Mammary epithelial cell (primary cell): ENCODE measurements at regions of chr3 and their contacts with region 1.

Region 1: GRCh38 chr3:112086076-112086854 is at the start of gene C3orf52:
- DNase-seq: peak; percentile 91
- H3K4me3 ChIP-seq: peak within 1 kb of the TSS; percentile 72 to 89 (median 84)
- H3K27ac ChIP-seq: peak within 1 kb of the TSS; percentile 96
- H3K4me1 ChIP-seq: peaks cover 19% of the 10 kb centered on the region
- H3K27me3 ChIP-seq: no peaks in the 10 kb centered on the region
- CTCF ChIP-seq: peak in 1 of 2 donors; percentile 18
- total RNA-seq, gene C3orf52: 15.4 to 16.8 TPM

Region 2: GRCh38 chr3:111676211-111677006 is 409.9 kb before region 1 on chr3:
- CTCF ChIA-PET with region 1: no interaction called
- dilution Hi-C with region 1: no loop called
- in situ Hi-C with region 1: no loop called
- intact Hi-C with region 1: no loop called
- DNase-seq: peak; percentile 88
- H3K4me3 ChIP-seq: peak overlapping the region; percentile 6 to 70 (median 57)
- H3K27ac ChIP-seq: peak overlapping the region; percentile 57
- H3K4me1 ChIP-seq: peaks cover 36% of the 10 kb centered on the region
- H3K27me3 ChIP-seq: no peaks in the 10 kb centered on the region
- CTCF ChIP-seq: no peak

Region 3: GRCh38 chr3:111904376-111905241 is 181.7 kb before region 1 on chr3:
- CTCF ChIA-PET with region 1: no interaction called
- dilution Hi-C with region 1: no loop called
- in situ Hi-C with region 1: no loop called
- intact Hi-C with region 1: loop called (anchors 2 kb)
- DNase-seq: peak; percentile 89
- H3K4me3 ChIP-seq: no peak overlapping the region
- H3K27ac ChIP-seq: peak overlapping the region; percentile 85
- H3K4me1 ChIP-seq: peaks cover 37% of the 10 kb centered on the region
- H3K27me3 ChIP-seq: no peaks in the 10 kb centered on the region
- CTCF ChIP-seq: peak; percentile 26 to 51

Region 4: DNA sequence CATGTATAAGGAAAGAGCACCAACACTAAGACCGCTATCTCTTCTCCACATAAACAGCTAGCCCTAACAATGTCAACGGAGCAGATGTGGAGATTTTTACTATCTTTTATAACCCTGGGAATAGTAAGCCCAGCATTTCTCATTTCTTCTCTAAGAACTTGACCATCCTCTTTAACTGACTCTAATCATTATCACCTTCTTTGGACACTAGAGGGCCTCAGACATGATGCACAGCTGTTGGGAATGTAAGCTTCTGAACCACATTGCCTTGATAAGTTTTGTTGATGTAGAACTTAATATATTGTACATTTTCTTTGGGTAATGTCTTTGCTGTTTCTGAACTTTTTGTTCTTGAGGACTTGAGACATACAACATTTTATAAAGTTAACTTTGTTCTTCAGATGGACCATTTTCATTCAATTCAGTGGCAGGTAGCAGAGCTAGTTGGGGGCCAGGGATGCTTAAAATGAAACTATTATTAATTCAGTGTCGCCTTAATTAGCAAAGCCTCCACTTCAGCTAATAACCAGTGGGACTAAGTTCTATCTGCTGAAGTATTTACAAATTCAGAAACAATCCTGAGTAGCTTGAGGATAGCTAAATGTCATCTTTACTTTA is 97.1 kb before region 1 on chr3:
- CTCF ChIA-PET with region 1: no interaction called
- dilution Hi-C with region 1: no loop called
- in situ Hi-C with region 1: no loop called
- intact Hi-C with region 1: loop called (anchors 2 kb)
- DNase-seq: peak; percentile 55
- H3K4me3 ChIP-seq: no peak overlapping the region
- H3K27ac ChIP-seq: no peak overlapping the region
- H3K4me1 ChIP-seq: no peaks in the 10 kb centered on the region
- H3K27me3 ChIP-seq: no peaks in the 10 kb centered on the region
- CTCF ChIP-seq: peak; percentile 79 to 82

Region 5: DNA sequence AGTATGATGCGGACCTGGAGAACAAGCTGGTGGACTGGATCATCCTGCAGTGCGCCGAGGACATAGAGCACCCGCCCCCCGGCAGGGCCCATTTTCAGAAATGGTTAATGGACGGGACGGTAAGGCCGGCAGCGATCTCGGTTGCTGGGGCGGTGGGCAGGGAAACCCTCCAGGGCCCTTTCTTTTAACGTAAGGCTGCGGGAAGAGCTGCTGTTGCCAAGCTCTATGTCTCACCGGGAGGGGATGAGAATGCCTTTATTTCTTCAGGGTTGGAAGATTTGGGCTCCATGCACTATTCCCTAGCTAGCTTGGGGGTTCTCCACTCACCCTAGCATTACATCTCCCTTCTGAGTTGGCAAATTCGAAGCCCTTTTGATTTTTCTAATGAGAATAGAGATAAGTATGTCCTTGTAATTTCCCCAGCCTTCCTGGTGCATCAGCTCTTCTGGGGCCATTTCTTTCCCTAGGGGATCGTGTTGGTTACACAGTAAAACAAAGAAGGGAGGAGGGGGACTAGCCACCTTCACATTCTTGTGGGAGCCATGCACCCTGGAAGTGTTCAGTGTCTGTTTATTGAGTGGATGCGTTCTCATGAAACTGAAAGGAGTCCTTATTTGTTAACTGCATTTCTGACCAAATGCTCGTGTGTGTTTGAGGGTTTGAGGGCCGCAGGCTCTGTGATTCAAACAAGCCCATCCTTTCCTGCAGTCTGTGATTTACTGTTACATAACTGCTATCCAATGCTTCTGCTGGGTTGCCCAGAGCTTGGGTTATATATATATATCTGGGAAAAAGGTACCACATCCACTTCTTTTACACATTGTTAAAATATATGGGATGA is 86.6 kb before region 1 on chr3:
- CTCF ChIA-PET with region 1: no interaction called
- dilution Hi-C with region 1: no loop called
- in situ Hi-C with region 1: no loop called
- intact Hi-C with region 1: no loop called
- DNase-seq: no peak
- H3K4me3 ChIP-seq: peak overlapping the region; percentile 58 to 76 (median 74)
- H3K27ac ChIP-seq: no peak overlapping the region
- H3K4me1 ChIP-seq: peaks cover 55% of the 10 kb centered on the region
- H3K27me3 ChIP-seq: no peaks in the 10 kb centered on the region
- CTCF ChIP-seq: no peak

Region 6: GRCh38 chr3:112074721-112075497 is 11.4 kb before region 1 on chr3:
- CTCF ChIA-PET with region 1: no interaction called
- dilution Hi-C with region 1: no loop called
- in situ Hi-C with region 1: no loop called
- intact Hi-C with region 1: loop called (anchors 1 kb)
- DNase-seq: peak; percentile 100
- H3K4me3 ChIP-seq: peak overlapping the region in 2 of 3 experiments; percentile 12 to 19
- H3K27ac ChIP-seq: peak overlapping the region; percentile 100
- H3K4me1 ChIP-seq: peaks cover 20% of the 10 kb centered on the region
- H3K27me3 ChIP-seq: no peaks in the 10 kb centered on the region
- CTCF ChIP-seq: no peak

Region 7: DNA sequence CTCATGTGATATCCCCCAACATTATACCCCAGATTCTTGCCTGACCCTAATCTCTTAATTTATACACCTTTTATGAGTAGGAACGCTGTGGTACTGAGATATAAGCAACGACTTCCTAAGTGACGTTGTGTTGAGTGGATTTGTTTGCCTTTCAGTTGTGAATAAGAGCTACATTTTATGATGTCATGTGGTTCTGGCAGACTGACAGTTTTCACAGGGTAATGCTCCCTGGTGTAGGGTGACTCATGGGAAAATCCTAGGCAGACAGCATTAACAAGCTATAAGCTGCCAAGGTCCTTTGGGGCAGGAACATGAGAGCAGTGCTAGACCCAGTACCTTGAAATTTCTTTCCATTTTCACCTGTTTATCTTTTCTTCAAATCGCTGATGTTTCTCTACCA is 11.1 kb after region 1 on chr3:
- CTCF ChIA-PET with region 1: interaction called, 8 read pairs
- dilution Hi-C with region 1: no loop called
- in situ Hi-C with region 1: no loop called
- intact Hi-C with region 1: loop called (anchors 1 kb)
- DNase-seq: peak; percentile 99
- H3K4me3 ChIP-seq: no peak overlapping the region
- H3K27ac ChIP-seq: peak overlapping the region; percentile 70
- H3K4me1 ChIP-seq: peaks cover 37% of the 10 kb centered on the region
- H3K27me3 ChIP-seq: no peaks in the 10 kb centered on the region
- CTCF ChIP-seq: no peak